ENCODE measurements at regions of chr11 and their contacts with region 1.

Region 1: GRCh38 chr11:12377824-12378593 is 638 bp downstream of the PARVA start:
- DNase-seq: peak; percentile 85
- ATAC-seq: peak; percentile 58

Region 2: DNA sequence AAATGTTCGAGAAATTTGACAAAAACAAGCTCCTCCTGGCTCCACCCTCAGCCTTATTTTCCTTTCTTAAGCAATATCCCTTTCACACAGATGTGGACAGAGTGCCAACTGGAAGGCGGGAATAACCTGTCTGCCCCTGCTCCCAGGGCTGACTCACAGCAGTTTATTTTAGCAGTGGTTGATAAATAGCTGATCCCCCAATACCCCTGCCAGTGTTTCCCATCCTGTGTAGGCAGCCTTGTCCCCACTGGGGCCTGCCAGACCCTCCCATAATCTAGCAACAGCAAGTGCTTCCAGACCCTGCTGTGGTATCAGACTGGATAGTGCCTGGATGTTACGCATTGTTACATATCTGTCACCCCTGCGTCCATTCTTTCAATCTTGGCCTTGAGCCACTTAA is 52.9 kb after region 1 on chr11:
- intact Hi-C with region 1: loop called (anchors 5 kb)
- DNase-seq: no peak
- ATAC-seq: peak; percentile 70

Region 3: GRCh38 chr11:12485328-12485727 is 107.3 kb after region 1 on chr11:
- intact Hi-C with region 1: loop called (anchors 10 kb)
- DNase-seq: no peak
- ATAC-seq: no peak

Region 4: DNA sequence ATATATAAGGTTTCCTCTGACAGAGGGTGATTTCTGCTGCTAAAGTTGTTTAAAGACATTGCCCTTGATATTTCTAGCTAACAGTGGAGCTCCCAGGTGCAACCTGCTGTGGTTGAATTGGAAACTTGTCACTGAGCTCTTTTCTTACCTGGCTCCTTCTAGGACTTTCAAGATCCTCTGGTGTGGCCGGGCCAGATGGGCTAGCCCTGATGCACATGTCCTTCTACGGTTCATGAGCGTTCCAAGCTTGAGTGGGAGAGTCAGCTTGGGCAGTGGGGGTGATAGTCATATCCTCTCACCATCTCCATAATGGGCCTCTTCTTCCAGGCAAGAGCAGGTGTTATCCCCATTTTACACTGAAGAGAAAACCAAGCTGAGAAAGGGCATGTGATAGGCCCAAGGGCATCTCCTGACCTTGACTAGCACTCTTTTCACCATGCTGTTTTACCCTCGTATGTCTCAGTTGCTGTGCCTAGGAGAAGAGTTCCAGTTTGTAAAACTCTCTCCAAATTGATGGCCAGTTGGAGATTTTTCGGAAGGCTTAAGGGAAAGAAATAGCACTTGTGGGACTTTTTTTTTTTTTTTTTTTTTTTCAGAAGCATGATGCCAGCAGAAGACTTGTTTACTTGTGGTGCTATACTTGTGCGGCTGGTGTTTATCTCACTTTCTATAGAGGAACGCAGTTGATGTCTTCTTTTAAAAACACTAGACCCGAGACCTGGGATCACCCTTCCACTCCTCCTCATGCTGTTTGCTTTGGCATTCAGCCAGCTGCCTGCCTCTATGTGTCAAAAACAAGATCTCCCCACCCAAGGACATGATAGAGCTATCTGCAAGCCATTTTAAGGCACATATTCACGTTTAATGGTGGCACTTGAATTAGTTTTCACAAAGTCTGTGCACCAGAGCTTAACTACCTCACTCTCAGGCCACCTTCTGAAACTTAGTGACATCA is 328.8 kb after region 1 on chr11:
- intact Hi-C with region 1: no loop called
- DNase-seq: no peak
- ATAC-seq: peak; percentile 50

Measured in Right ventricle myocardium inferior (tissue), 1 donor.